Activated T-helper 1 cell treated with anti-CD3 and anti-CD28 coated beads, Interleukin-12 subunit alpha, Interleukin-12 subunit beta, Interleukin-2, Interleukin-4 antibody, amounts not matched to agents 30 ng/mL and 10 ng/mL and 1 ng/mL, durations not matched to agents 14 hours and 24 hours and 36 hours (primary cell): ENCODE measurements at regions of chr12 and their contacts with region 1.

Region 1: GRCh38 chr12:4276524-4277204 is 3.1 kb downstream of the CCND2 start:
- DNase-seq: peak; percentile 79
- H3K4me3 Mint-ChIP-seq: peak overlapping the region; percentile 94
- H3K27ac Mint-ChIP-seq: peak overlapping the region; percentile 96
- H3K4me1 Mint-ChIP-seq: peaks cover 57% of the 10 kb centered on the region
- H3K27me3 Mint-ChIP-seq: no peaks in the 10 kb centered on the region

Region 2: GRCh38 chr12:3872800-3873636 is 403.6 kb before region 1 on chr12 and contains the start of gene PARP11:
- intact Hi-C with region 1: loop called (anchors 1 kb)
- DNase-seq: peak; percentile 96
- H3K4me3 Mint-ChIP-seq: peak within 1 kb of the TSS; percentile 98
- H3K27ac Mint-ChIP-seq: peak within 1 kb of the TSS; percentile 99
- H3K4me1 Mint-ChIP-seq: peaks cover 52% of the 10 kb centered on the region
- H3K27me3 Mint-ChIP-seq: no peaks in the 10 kb centered on the region
- total RNA-seq, gene PARP11: 13.2 and 13.9 TPM in 2 replicates

Region 3: GRCh38 chr12:3996348-3996747 is 280.3 kb before region 1 on chr12:
- intact Hi-C with region 1: loop called (anchors 1 kb)
- DNase-seq: no peak
- H3K4me3 Mint-ChIP-seq: no peak overlapping the region
- H3K27ac Mint-ChIP-seq: no peak overlapping the region
- H3K4me1 Mint-ChIP-seq: peaks cover 16% of the 10 kb centered on the region
- H3K27me3 Mint-ChIP-seq: peaks cover 14% of the 10 kb centered on the region

Region 4: GRCh38 chr12:4143896-4144295 is 132.8 kb before region 1 on chr12:
- intact Hi-C with region 1: loop called (anchors 1 kb)
- DNase-seq: no peak
- H3K4me3 Mint-ChIP-seq: peak overlapping the region; percentile 23
- H3K27ac Mint-ChIP-seq: peak overlapping the region; percentile 68
- H3K4me1 Mint-ChIP-seq: peaks cover 97% of the 10 kb centered on the region
- H3K27me3 Mint-ChIP-seq: no peaks in the 10 kb centered on the region

Region 5: DNA sequence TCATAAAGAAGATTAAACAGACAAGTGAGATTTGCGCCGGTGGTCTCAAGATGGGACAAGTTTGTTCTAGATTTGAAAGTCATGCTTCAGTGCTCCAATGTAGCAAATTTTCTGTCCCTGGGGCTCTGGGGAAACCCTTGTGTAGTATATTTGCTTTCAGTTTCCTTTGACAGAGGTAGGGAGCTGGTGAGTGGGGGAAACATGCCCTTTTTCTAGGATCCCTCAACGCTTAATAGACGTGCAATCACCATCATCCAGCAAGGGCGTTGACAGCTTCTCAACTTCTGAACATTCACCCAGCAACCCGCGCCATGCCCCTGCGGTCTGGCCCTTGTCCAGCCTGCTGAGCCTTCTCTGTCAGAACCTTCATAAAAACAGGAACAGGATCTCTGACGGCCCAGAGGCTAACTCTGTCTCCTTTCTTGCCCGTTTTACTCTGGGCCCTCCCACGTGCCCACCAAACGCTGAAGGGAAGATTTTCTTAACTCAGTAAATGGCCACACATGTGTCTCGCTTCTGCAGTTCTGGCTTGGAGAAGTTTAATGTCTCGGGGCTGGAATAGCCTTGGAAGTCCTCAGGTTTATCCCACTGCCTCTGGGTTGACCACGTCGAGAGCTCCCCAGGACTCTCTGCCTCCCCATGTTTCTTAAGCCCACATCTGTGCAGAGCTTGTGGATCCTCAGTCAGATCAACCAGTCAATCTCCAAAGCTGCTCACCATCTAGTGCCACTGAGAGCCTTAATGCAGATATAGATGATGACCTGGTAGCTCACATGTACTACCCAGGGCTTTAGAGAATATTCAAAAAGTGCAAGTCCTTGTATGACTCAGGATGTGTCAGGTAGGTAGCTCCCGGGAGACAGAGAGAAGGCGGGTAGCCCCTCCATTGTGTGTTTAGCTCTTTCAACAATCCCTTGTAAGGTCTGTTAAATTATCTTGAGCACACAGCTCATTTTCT is 61.2 kb before region 1 on chr12:
- intact Hi-C with region 1: loop called (anchors 2 kb)
- DNase-seq: peak; percentile 24
- H3K4me3 Mint-ChIP-seq: peak overlapping the region; percentile 65
- H3K27ac Mint-ChIP-seq: peak overlapping the region; percentile 83
- H3K4me1 Mint-ChIP-seq: peaks cover 49% of the 10 kb centered on the region
- H3K27me3 Mint-ChIP-seq: peaks cover 2% of the 10 kb centered on the region

Region 6: GRCh38 chr12:4506870-4507269 is 230.2 kb after region 1 on chr12:
- intact Hi-C with region 1: loop called (anchors 2 kb)
- DNase-seq: peak; percentile 29
- H3K4me3 Mint-ChIP-seq: peak overlapping the region; percentile 40
- H3K27ac Mint-ChIP-seq: peak overlapping the region; percentile 42
- H3K4me1 Mint-ChIP-seq: peaks cover 36% of the 10 kb centered on the region
- H3K27me3 Mint-ChIP-seq: no peaks in the 10 kb centered on the region